Activated CD8-positive, alpha-beta memory T cell treated with anti-CD3 and anti-CD28 coated beads, Interleukin-2, amount 10 ng/mL, durations not matched to agents 7 days and 5 days (primary cell): ENCODE measurements at regions of chr11 and their contacts with region 1.

Region 1: DNA sequence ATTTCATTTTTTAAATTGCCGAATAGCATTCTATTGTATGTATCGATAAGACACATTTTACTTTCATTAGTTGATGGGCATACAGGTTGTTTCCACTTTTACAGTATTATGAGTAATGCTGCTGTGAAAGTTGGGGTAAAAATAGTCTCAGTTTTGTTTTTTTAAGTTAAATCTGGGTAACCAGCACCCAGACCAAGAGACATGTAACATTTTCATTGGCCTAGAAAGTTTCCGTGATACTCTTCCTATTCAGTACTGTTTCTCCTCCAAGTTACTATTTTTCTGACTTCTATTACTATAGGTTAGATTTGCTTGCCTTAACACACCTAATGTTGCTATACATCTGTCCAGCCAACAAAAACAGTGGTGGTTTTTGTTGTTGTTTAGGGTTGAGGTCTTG is 12.3 kb downstream of the IPO7 start:
- DNase-seq: no peak
- ATAC-seq: peak; percentile 45
- H3K4me3 Mint-ChIP-seq: no peak overlapping the region
- H3K27ac Mint-ChIP-seq: peak overlapping the region; percentile 61
- H3K4me1 Mint-ChIP-seq: peaks cover 58% of the 10 kb centered on the region
- H3K27me3 Mint-ChIP-seq: no peaks in the 10 kb centered on the region

Region 2: GRCh38 chr11:9273376-9274336 is 123.1 kb before region 1 on chr11:
- CTCF ChIA-PET with region 1: no interaction called
- DNase-seq: no peak
- ATAC-seq: no peak
- H3K4me3 Mint-ChIP-seq: no peak overlapping the region
- H3K27ac Mint-ChIP-seq: no peak overlapping the region
- H3K4me1 Mint-ChIP-seq: no peaks in the 10 kb centered on the region
- H3K27me3 Mint-ChIP-seq: peaks cover 16% of the 10 kb centered on the region

Region 3: GRCh38 chr11:9384535-9385303 is 12.0 kb before region 1 on chr11 and contains the start of gene IPO7:
- CTCF ChIA-PET with region 1: interaction called, 12 read pairs
- DNase-seq: peak; percentile 95
- ATAC-seq: peak; percentile 96
- H3K4me3 Mint-ChIP-seq: peak within 1 kb of the TSS; percentile 93
- H3K27ac Mint-ChIP-seq: peak within 1 kb of the TSS; percentile 85
- H3K4me1 Mint-ChIP-seq: peaks cover 35% of the 10 kb centered on the region
- H3K27me3 Mint-ChIP-seq: no peaks in the 10 kb centered on the region
- total RNA-seq, gene IPO7: 98.5 to 121 TPM